ENCODE measurements at regions of chr17 and their contacts with region 1.

Region 1: DNA sequence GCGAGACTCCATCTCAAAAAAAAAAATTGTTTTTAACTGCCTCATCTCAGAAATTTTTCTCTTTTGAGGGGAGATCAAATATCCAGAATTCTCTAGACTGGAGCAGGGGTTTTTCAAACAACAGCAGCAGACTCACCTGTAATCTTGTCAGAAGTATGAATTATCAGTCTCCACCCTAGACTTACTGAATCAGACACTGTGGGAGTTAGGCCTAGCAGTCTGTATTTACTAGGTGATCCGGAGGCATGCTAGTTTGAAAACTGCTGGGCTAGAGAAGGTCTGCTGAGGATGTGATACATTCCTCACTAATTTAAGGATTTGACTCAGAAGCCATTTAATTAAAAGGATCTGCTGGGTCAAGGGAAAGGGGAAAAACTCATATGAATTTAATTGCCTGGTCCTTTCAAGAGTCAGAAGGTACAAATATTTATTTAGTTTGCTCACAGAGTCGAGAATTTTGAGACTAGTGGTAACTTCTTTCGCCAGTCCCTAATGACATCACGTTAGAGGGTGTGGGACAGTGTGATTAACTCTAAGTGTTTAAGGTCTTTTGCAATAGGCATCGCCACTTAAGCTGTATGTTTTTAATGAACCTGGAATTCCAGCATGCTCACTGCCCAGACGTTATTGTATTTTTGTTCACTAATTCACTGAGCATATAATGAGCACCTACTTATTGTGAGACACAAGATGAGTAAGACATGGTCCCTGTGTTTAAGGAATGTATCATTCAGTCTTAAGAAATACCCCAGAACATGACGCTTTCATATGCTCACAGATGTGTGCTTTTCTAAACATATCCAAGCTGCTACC is 14.2 kb downstream of the ATP6V0A1 start:
- DNase-seq: peak; percentile 62
- H3K4me3 Mint-ChIP-seq: no peak overlapping the region
- H3K27ac Mint-ChIP-seq: peak overlapping the region; percentile 83
- H3K4me1 Mint-ChIP-seq: peaks cover 13% of the 10 kb centered on the region
- H3K27me3 Mint-ChIP-seq: no peaks in the 10 kb centered on the region
- CTCF ChIP-seq: no peak

Region 2: DNA sequence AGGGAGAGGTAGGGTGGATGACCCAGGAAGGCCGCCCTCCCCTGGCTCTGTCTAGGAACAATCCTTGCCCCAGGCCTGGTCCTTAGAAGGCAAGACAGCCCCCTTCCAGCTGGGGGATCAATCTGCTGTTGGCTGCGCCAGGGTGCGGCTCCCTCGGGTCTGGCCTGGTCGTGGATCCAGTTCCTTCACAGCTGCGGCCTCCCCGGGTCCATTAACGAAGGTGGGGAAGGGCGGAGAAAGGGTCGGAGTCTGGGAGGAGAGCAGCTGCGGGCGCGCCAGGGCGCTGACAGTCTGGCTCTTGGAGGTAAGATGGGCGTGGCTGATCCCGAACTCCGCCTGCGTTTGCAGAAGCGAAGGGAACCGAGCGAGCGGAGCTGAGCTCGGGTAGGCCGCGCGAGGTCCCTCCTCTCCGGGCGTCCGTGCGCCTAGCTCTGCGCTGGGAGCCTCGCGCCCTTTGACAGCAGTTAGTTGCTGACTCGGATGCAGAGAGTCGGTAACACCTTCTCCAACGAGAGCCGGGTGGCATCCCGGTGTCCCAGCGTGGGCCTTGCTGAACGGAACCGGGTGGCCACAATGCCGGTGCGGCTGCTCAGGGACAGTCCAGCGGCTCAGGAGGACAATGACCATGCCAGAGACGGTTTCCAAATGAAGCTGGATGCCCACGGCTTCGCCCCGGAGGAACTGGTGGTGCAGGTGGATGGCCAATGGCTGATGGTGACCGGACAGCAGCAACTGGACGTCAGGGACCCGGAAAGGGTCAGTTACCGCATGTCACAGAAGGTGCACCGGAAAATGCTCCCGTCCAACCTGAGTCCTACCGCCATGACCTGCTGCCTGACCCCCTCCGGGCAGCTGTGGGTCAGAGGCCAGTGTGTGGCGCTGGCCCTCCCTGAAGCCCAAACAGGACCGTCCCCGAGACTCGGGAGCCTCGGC is 350.3 kb before region 1 on chr17 and contains the start of gene HSPB9:
- CTCF ChIA-PET with region 1: no interaction called
- POLR2A ChIA-PET with region 1: no interaction called
- intact Hi-C with region 1: no loop called
- DNase-seq: no peak
- H3K4me3 Mint-ChIP-seq: peak within 1 kb of the TSS; percentile 53
- H3K27ac Mint-ChIP-seq: no peak within 1 kb of the TSS
- H3K4me1 Mint-ChIP-seq: peaks cover 6% of the 10 kb centered on the region
- H3K27me3 Mint-ChIP-seq: no peaks in the 10 kb centered on the region
- CTCF ChIP-seq: no peak
- total RNA-seq, gene HSPB9: not detected in 2 replicates

Region 3: GRCh38 chr17:42322382-42323267 is 150.3 kb before region 1 on chr17:
- CTCF ChIA-PET with region 1: interaction called, 3 read pairs
- POLR2A ChIA-PET with region 1: interaction called, 6 read pairs
- intact Hi-C with region 1: loop called (anchors 1 kb)
- DNase-seq: peak; percentile 93
- H3K4me3 Mint-ChIP-seq: no peak overlapping the region
- H3K27ac Mint-ChIP-seq: peak overlapping the region; percentile 46
- H3K4me1 Mint-ChIP-seq: peaks cover 11% of the 10 kb centered on the region
- H3K27me3 Mint-ChIP-seq: no peaks in the 10 kb centered on the region
- CTCF ChIP-seq: peak; percentile 99

Region 4: GRCh38 chr17:42428141-42428944 is 44.6 kb before region 1 on chr17:
- CTCF ChIA-PET with region 1: no interaction called
- POLR2A ChIA-PET with region 1: interaction called, 8 read pairs
- intact Hi-C with region 1: loop called (anchors 2 kb)
- DNase-seq: peak; percentile 94
- H3K4me3 Mint-ChIP-seq: no peak overlapping the region
- H3K27ac Mint-ChIP-seq: peak overlapping the region; percentile 73
- H3K4me1 Mint-ChIP-seq: peaks cover 10% of the 10 kb centered on the region
- H3K27me3 Mint-ChIP-seq: no peaks in the 10 kb centered on the region
- CTCF ChIP-seq: peak; percentile 75

Region 5: DNA sequence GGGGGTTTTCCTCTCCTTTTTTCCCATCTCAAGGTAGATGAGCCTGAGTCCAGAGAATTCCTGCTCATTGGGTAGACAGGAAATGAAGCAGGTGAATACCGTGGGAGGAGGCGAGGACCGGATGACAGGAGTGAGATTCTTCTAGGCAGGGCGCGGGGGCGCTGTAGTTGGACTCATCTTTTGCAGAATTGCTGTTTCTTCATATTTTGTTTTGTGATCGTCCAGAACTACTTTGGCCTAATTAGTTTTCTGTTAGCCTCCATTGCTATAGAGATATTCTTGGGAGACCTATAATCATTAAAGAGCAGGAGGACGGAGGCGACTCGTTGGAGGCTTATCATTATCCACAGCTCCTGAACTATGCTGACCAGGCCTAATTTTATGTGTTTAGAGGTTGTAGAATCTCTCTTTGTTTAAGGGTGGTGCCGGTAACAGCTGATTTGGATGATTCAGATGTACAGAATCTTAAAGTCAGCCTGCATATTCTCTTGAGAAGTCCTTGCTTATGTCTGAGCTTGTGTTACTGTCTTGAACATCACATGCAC is 13.6 kb before region 1 on chr17:
- CTCF ChIA-PET with region 1: interaction called, 3 read pairs
- POLR2A ChIA-PET with region 1: interaction called, 25 read pairs
- intact Hi-C with region 1: loop called (anchors 1 kb)
- DNase-seq: peak; percentile 63
- H3K4me3 Mint-ChIP-seq: peak overlapping the region; percentile 92
- H3K27ac Mint-ChIP-seq: peak overlapping the region; percentile 92
- H3K4me1 Mint-ChIP-seq: peaks cover 37% of the 10 kb centered on the region
- H3K27me3 Mint-ChIP-seq: no peaks in the 10 kb centered on the region
- CTCF ChIP-seq: peak; percentile 29

Measured in MCF 10A (cell line).